ENCODE measurements at regions of chr11 and their contacts with region 1.

Region 1: DNA sequence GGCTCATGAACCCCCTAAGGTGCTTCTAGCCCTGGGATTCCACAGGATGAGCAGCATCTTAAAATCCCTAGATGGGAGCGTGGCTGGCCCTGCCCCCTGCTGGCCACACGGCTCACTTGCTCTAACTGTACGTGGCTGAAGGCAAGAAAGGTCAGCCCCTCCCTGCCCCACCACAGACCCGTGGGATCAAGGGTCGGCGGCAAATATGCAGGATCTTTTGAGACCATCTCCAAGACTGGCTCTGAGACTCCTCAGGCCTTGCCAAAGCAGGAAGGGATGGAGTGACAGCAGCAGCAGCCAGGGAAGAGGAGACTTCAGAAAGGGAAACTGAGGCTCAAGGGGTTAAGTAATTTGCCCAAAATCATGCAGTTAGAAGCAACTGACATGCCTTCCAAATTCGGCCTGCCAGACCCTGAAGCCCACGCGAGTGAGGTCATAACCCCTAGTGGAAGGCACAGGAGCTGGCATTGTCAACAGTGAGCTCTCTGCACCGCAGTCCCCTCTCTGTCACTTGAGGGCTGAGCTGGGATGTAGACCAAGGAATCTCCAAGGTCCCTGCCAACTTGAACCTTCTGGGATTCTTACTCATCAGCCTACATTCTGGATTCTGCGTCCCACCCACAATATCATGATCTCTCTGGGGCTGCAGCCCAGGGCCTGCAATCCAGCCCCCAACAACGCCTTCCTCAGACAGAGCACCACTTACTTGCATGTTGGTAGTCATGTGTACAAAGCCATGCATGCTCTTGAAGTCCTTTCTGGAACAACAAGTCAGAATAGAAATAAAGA is 31.4 kb downstream of the CREB3L1 start:
- DNase-seq: peak; percentile 83
- CTCF ChIP-seq: peak; percentile 89

Region 2: GRCh38 chr11:46247664-46248063 is 61.2 kb before region 1 on chr11:
- CTCF ChIA-PET with region 1: interaction called, 480 read pairs
- POLR2A ChIA-PET with region 1: no interaction called
- DNase-seq: peak; percentile 61
- CTCF ChIP-seq: peak; percentile 51

Region 3: GRCh38 chr11:46278387-46279125 is 30.3 kb before region 1 on chr11:
- CTCF ChIA-PET with region 1: interaction called, 10 read pairs
- POLR2A ChIA-PET with region 1: no interaction called
- DNase-seq: no peak
- CTCF ChIP-seq: peak; percentile 57

Region 4: DNA sequence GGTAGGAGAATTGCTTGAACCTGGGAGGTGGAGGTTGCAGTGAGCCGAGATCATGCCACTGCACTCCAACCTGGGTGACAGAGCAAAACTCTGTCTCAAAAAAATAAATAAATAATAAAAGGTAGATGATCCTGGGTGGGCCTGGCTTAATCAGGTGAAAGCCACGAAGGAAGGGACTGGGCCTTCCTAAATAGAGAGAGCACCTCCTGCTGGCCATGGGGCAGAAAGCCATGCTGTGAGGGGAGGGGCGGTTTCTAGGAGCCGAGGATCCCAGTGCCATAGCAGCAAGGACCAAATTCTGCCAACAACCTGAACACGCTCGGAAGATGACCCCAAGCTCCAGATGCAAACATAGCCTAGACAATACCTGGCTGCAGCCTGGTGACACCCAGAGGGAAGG is 13.9 kb after region 1 on chr11:
- CTCF ChIA-PET with region 1: interaction called, 38 read pairs
- POLR2A ChIA-PET with region 1: no interaction called
- DNase-seq: no peak
- CTCF ChIP-seq: no peak